CD4-positive, alpha-beta T cell (primary cell): ENCODE measurements at regions of chr11 and their contacts with region 1.

Region 1: DNA sequence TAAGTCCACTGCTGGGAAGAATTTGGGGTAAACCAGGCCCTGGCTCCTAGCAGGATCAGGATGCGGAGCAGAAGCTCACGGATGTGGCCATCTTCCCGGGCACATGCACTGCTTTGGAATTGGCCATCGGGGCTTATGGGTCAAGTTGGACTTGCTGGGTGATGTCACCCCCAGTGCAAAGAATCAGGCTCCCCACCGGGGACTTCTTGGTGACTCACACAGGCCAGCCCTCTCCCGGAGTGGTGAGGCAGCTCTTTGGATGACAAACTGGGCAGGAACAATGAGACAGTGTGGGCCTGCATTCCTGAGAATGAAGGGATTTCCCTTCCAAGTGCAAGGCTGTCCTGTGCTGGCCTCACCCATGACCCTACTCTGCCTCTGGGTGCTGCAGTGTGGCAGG is 128.8 kb upstream of the ANO1 start:
- DNase-seq: no peak
- ATAC-seq: no peak
- H3K4me3 ChIP-seq: no peak overlapping the region
- H3K4me3 Mint-ChIP-seq: no peak overlapping the region
- H3K27ac ChIP-seq: no peak overlapping the region
- H3K27ac Mint-ChIP-seq: no peak overlapping the region
- H3K4me1 ChIP-seq: no peaks in the 10 kb centered on the region
- H3K4me1 Mint-ChIP-seq: no peaks in the 10 kb centered on the region
- H3K27me3 ChIP-seq: peaks cover 7 to 8% of the 10 kb centered on the region in 2 experiments
- H3K27me3 Mint-ChIP-seq: peaks cover 17% of the 10 kb centered on the region
- CTCF ChIP-seq: no peak

Region 2: GRCh38 chr11:69918938-69919650 is 30.2 kb before region 1 on chr11:
- CTCF ChIA-PET with region 1: no interaction called
- POLR2A ChIA-PET with region 1: no interaction called
- intact Hi-C with region 1: no loop called
- DNase-seq: peak; percentile 43 to 77 (median 60)
- ATAC-seq: peak; percentile 58
- H3K4me3 ChIP-seq: no peak overlapping the region
- H3K4me3 Mint-ChIP-seq: no peak overlapping the region
- H3K27ac ChIP-seq: no peak overlapping the region
- H3K27ac Mint-ChIP-seq: no peak overlapping the region
- H3K4me1 ChIP-seq: peaks cover 9% of the 10 kb centered on the region
- H3K4me1 Mint-ChIP-seq: no peaks in the 10 kb centered on the region
- H3K27me3 ChIP-seq: peaks cover 14 to 33% of the 10 kb centered on the region in 2 experiments
- H3K27me3 Mint-ChIP-seq: peaks cover 62% of the 10 kb centered on the region
- CTCF ChIP-seq: peak; percentile 77

Region 3: DNA sequence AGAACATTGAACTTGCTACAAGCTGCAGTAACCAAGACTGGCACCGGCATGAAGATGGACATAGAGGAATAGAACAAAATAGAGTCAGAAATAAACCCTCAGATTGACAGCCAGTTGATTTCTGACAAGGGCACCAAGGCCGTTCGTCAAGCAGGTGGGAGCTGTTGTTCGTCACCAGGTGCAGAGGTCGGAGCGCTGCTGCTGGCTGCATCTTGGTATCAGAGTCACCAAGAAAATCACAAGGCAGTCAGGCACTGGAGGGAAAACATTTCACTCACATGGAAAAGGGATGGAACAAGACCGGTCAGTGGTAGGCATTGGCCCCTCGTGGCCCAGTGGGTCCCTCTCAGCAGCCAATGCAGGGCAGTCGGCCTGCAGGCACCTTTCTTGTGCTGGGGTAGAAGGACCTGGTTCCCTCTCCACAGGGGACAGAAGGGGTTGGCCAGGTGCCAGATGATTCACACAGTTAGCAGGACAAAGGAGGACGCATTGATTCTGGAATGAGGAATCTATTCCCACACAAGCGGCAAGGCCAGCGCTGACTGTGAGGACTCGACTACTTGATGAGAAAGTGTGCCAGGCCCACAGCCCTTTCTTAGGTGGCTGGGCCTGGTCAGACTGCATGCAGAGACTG is 14.3 kb before region 1 on chr11:
- CTCF ChIA-PET with region 1: no interaction called
- POLR2A ChIA-PET with region 1: no interaction called
- intact Hi-C with region 1: no loop called
- DNase-seq: no peak
- ATAC-seq: no peak
- H3K4me3 ChIP-seq: no peak overlapping the region
- H3K4me3 Mint-ChIP-seq: no peak overlapping the region
- H3K27ac ChIP-seq: no peak overlapping the region
- H3K27ac Mint-ChIP-seq: no peak overlapping the region
- H3K4me1 ChIP-seq: no peaks in the 10 kb centered on the region
- H3K4me1 Mint-ChIP-seq: no peaks in the 10 kb centered on the region
- H3K27me3 ChIP-seq: peaks cover 5% of the 10 kb centered on the region in 2 experiments
- H3K27me3 Mint-ChIP-seq: peaks cover 22% of the 10 kb centered on the region
- CTCF ChIP-seq: no peak

Region 4: GRCh38 chr11:70073871-70074371 is 124.6 kb after region 1 on chr11:
- CTCF ChIA-PET with region 1: no interaction called
- POLR2A ChIA-PET with region 1: no interaction called
- intact Hi-C with region 1: loop called in 1 of 2 experiments (anchors 10 kb)
- DNase-seq: no peak
- ATAC-seq: no peak
- H3K4me3 ChIP-seq: no peak overlapping the region
- H3K4me3 Mint-ChIP-seq: no peak overlapping the region
- H3K27ac ChIP-seq: no peak overlapping the region
- H3K27ac Mint-ChIP-seq: no peak overlapping the region
- H3K4me1 ChIP-seq: no peaks in the 10 kb centered on the region
- H3K4me1 Mint-ChIP-seq: no peaks in the 10 kb centered on the region
- H3K27me3 ChIP-seq: peaks cover 42 to 65% of the 10 kb centered on the region in 2 experiments
- H3K27me3 Mint-ChIP-seq: peaks cover 87% of the 10 kb centered on the region
- CTCF ChIP-seq: no peak